ENCODE measurements at regions of chr1 and their contacts with region 1.

Region 1: GRCh38 chr1:212062832-212063438 is 27.4 kb downstream of the DTL start:
- DNase-seq: no peak
- ATAC-seq: no peak
- H3K4me3 Mint-ChIP-seq: no peak overlapping the region
- H3K27ac Mint-ChIP-seq: no peak overlapping the region
- H3K4me1 Mint-ChIP-seq: peaks cover 3% of the 10 kb centered on the region
- H3K27me3 Mint-ChIP-seq: no peaks in the 10 kb centered on the region

Region 2: DNA sequence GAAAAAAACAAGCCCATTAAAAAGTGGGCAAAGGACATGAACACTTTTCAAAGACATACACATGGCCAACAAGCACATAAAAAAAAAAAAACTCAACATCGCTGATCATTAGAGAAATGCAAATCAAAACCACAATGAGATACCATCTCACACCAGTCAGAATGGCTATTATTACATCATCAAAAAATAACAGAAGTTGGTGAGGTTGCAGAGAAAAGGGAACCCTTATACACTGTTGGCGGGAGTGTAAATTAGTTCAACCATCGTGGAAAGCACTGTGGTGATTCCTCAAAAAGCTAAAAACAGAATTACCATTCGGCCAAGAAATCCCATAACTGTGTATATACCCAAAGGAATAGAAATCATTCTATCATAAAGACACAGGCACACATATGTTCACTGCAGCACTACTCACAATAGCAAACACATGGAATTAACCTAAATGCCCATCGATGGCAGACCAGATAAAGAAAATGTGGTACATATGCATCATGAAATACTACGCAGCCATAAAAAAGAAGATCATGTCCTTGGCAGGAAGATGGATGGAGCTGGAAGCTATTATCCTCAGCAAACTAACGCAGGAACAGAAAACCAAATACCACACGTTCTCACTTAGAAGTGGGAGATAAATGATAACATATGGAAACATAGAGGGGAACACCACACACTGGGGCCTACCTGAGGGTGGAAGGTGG is 97.7 kb before region 1 on chr1:
- CTCF ChIA-PET with region 1: no interaction called
- DNase-seq: no peak
- ATAC-seq: no peak
- H3K4me3 Mint-ChIP-seq: no peak overlapping the region
- H3K27ac Mint-ChIP-seq: no peak overlapping the region
- H3K4me1 Mint-ChIP-seq: no peaks in the 10 kb centered on the region
- H3K27me3 Mint-ChIP-seq: no peaks in the 10 kb centered on the region

Region 3: GRCh38 chr1:212291505-212292134 is 228.7 kb after region 1 on chr1:
- CTCF ChIA-PET with region 1: interaction called, 19 read pairs
- DNase-seq: no peak
- ATAC-seq: peak; percentile 84
- H3K4me3 Mint-ChIP-seq: peak overlapping the region; percentile 7
- H3K27ac Mint-ChIP-seq: peak overlapping the region; percentile 16
- H3K4me1 Mint-ChIP-seq: peaks cover 73% of the 10 kb centered on the region
- H3K27me3 Mint-ChIP-seq: no peaks in the 10 kb centered on the region